Activated B cell treated with CpG ODN at 0.5 μM for 24 hours (primary cell): ENCODE measurements at regions of chr3 and their contacts with region 1.

Region 1: DNA sequence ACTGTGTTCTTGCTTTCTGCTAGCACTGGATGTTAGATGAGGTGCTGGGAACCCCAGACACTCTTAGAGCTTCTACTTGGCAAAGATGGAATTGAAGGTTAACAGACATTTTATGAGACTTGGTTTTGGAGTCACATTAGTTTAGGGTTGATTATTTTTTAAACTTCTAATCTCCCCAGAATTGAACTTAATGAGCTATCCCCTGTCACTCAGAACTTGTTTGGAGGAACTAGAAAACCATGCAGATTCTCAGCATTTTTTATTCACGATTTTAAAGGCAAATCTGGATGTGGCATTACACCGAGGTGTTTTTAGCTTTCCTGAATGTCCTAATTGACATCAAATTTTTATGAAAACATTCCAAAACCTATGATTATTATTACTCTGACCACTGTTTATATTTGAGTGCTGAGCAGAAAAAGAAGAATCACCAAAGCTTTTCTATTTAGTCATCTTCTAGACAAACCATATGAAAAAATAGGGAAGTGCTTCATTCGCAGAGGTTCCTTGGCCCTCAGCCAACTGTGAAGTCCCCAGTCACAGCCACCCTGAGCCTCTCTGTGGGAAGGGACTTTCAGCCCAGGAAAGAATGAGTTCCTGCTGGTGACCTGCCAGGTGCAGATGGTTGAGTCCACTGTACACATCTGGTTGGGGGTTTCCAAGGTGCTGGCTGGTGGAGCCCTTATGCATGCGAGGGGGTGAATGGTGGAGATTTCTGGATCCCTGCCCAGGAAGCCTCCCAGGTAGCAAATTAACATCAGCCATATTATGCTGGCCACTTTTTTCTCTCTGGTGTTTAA is 196.0 kb upstream of the TOPAZ1 start:
- DNase-seq: peak; percentile 66
- ATAC-seq: peak; percentile 95
- H3K4me3 Mint-ChIP-seq: peak overlapping the region; percentile 7
- H3K27ac Mint-ChIP-seq: peak overlapping the region; percentile 84
- H3K4me1 Mint-ChIP-seq: peaks cover 70% of the 10 kb centered on the region
- H3K27me3 Mint-ChIP-seq: no peaks in the 10 kb centered on the region
- CTCF ChIP-seq: no peak

Region 2: GRCh38 chr3:43621656-43622432 is 423.8 kb before region 1 on chr3 and contains the start of gene ANO10:
- CTCF ChIA-PET with region 1: no interaction called
- POLR2A ChIA-PET with region 1: no interaction called
- intact Hi-C with region 1: loop called (anchors 2 kb)
- DNase-seq: peak; percentile 98
- ATAC-seq: peak; percentile 91
- H3K4me3 Mint-ChIP-seq: peak within 1 kb of the TSS; percentile 88
- H3K27ac Mint-ChIP-seq: peak within 1 kb of the TSS; percentile 77
- H3K4me1 Mint-ChIP-seq: peaks cover 13% of the 10 kb centered on the region
- H3K27me3 Mint-ChIP-seq: peaks cover 1% of the 10 kb centered on the region
- CTCF ChIP-seq: no peak
- total RNA-seq, gene ANO10: 6.4 and 8.1 TPM in 2 replicates

Region 3: DNA sequence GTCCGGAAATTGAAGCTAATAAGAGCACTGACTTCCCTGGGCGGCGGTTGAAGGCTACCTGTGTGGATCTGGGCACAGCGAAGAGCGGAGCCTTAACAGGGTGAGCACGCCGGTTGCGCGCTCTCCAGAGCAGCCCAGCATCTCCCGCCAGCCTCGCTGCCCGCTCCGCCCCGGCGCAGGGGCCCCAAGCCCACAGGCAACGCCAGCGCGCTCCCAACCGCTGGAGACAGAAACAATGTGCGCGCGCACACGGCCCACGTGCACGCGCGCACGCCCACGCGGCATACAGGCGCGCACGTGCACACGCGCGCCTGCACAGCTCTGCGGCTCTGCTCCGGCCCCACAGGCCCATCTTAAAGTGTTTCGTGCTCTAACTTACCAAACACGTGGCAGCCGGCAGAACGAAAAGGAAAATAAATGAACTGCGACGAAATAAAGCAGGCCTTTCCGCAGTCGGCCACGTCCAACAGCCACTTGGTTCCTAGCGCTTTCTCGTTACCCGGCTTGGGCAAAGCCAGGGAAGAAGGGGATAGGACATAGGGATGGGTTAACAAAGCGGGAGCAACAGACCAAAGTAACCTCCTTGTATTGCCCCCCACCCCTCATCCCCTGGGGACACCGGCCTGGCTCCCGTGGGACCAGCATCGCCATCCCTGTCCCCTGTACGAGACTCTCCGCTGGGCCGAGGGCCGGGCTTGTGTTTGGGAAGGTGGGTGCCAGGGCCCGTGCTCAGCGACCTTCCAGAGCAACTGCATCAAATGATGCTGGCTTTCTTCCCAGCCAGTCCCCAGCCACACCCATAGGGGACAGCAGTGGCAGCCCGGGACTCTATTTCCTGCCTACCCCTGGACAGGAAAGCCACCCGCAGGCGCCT is 151.3 kb before region 1 on chr3:
- CTCF ChIA-PET with region 1: no interaction called
- POLR2A ChIA-PET with region 1: interaction called, 5 read pairs
- intact Hi-C with region 1: loop called (anchors 1 kb)
- DNase-seq: peak; percentile 43
- ATAC-seq: peak; percentile 63
- H3K4me3 Mint-ChIP-seq: peak overlapping the region; percentile 83
- H3K27ac Mint-ChIP-seq: peak overlapping the region; percentile 56
- H3K4me1 Mint-ChIP-seq: peaks cover 33% of the 10 kb centered on the region
- H3K27me3 Mint-ChIP-seq: peaks cover 17% of the 10 kb centered on the region
- CTCF ChIP-seq: no peak

Region 4: GRCh38 chr3:44058022-44058867 is 12.6 kb after region 1 on chr3:
- CTCF ChIA-PET with region 1: interaction called, 6 read pairs
- POLR2A ChIA-PET with region 1: interaction called, 11 read pairs
- intact Hi-C with region 1: loop called (anchors 1 kb)
- DNase-seq: peak; percentile 69
- ATAC-seq: peak; percentile 97
- H3K4me3 Mint-ChIP-seq: peak overlapping the region; percentile 75
- H3K27ac Mint-ChIP-seq: peak overlapping the region; percentile 92
- H3K4me1 Mint-ChIP-seq: peaks cover 38% of the 10 kb centered on the region
- H3K27me3 Mint-ChIP-seq: no peaks in the 10 kb centered on the region
- CTCF ChIP-seq: no peak

Region 5: DNA sequence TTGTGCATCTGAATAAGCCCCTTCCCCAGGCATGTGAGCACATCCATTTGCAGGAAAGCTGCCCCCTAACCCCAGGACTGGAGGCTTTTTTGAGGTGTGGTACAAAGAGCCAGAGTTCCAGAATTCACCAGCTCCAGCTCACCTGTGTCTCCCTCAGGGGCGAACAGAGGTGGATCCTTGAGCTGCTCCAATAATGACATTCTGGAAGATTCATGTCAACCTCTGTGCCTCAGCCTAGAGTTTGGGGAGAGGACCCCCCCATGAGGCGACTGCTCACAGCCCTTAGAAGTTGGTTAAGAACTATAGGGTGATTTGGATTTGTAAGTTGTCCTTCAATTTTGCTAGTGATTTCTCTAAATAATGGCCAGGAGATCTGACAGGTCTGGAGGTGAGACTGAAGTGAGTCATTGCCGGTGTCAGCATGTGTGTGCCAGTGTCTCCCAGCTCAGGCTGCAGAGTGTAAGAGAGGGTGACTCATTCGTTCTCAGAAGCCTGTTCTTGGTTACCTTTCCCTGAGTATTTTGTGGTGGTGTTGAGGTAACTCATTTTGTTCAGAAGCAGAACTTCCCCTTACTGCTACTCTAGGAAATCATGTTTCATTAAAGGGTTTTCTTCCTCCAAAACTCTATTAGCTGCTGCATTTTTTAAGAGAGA is 59.1 kb after region 1 on chr3:
- CTCF ChIA-PET with region 1: no interaction called
- POLR2A ChIA-PET with region 1: no interaction called
- intact Hi-C with region 1: loop called (anchors 5 kb)
- DNase-seq: no peak
- ATAC-seq: peak; percentile 95
- H3K4me3 Mint-ChIP-seq: no peak overlapping the region
- H3K27ac Mint-ChIP-seq: peak overlapping the region; percentile 1
- H3K4me1 Mint-ChIP-seq: peaks cover 13% of the 10 kb centered on the region
- H3K27me3 Mint-ChIP-seq: peaks cover 2% of the 10 kb centered on the region
- CTCF ChIP-seq: no peak

Region 6: GRCh38 chr3:44223299-44223698 is 177.6 kb after region 1 on chr3:
- CTCF ChIA-PET with region 1: no interaction called
- POLR2A ChIA-PET with region 1: no interaction called
- intact Hi-C with region 1: no loop called
- DNase-seq: no peak
- ATAC-seq: no peak
- H3K4me3 Mint-ChIP-seq: no peak overlapping the region
- H3K27ac Mint-ChIP-seq: no peak overlapping the region
- H3K4me1 Mint-ChIP-seq: no peaks in the 10 kb centered on the region
- H3K27me3 Mint-ChIP-seq: peaks cover 30% of the 10 kb centered on the region
- CTCF ChIP-seq: no peak